CD8-positive, alpha-beta T cell (primary cell): ENCODE measurements at regions of chr9 and their contacts with region 1.

Region 1: GRCh38 chr9:109119439-109120203 is at the start of gene TMEM245:
- DNase-seq: peak; percentile 87 to 99 (median 94)
- ATAC-seq: peak; percentile 93
- H3K4me3 ChIP-seq: peak within 1 kb of the TSS; percentile 70 to 88
- H3K4me3 Mint-ChIP-seq: peak within 1 kb of the TSS; percentile 93
- H3K27ac ChIP-seq: peak within 1 kb of the TSS; percentile 68 to 85
- H3K27ac Mint-ChIP-seq: peak within 1 kb of the TSS; percentile 89
- H3K4me1 ChIP-seq: peaks cover 42% of the 10 kb centered on the region
- H3K4me1 Mint-ChIP-seq: peaks cover 39% of the 10 kb centered on the region
- H3K27me3 ChIP-seq: no peaks in the 10 kb centered on the region
- H3K27me3 Mint-ChIP-seq: no peaks in the 10 kb centered on the region
- CTCF ChIP-seq: no peak
- total RNA-seq, gene TMEM245: 22.8 to 24.7 TPM

Region 2: GRCh38 chr9:107282753-107283625 is 1836.6 kb before region 1 on chr9 and contains the start of gene RAD23B:
- CTCF ChIA-PET with region 1: no interaction called
- POLR2A ChIA-PET with region 1: no interaction called
- intact Hi-C with region 1: loop called in 1 of 2 experiments (anchors 2 kb)
- DNase-seq: peak; percentile 96 to 99 (median 98)
- ATAC-seq: peak; percentile 87
- H3K4me3 ChIP-seq: peak within 1 kb of the TSS; percentile 69 to 90
- H3K4me3 Mint-ChIP-seq: peak within 1 kb of the TSS; percentile 96
- H3K27ac ChIP-seq: peak within 1 kb of the TSS; percentile 81 to 87
- H3K27ac Mint-ChIP-seq: peak within 1 kb of the TSS; percentile 94
- H3K4me1 ChIP-seq: peaks cover 37% of the 10 kb centered on the region
- H3K4me1 Mint-ChIP-seq: peaks cover 42% of the 10 kb centered on the region
- H3K27me3 ChIP-seq: peaks cover 0 to under 1% of the 10 kb centered on the region in 2 experiments
- H3K27me3 Mint-ChIP-seq: no peaks in the 10 kb centered on the region
- CTCF ChIP-seq: no peak
- total RNA-seq, gene RAD23B: 82.9 to 91.0 TPM

Region 3: DNA sequence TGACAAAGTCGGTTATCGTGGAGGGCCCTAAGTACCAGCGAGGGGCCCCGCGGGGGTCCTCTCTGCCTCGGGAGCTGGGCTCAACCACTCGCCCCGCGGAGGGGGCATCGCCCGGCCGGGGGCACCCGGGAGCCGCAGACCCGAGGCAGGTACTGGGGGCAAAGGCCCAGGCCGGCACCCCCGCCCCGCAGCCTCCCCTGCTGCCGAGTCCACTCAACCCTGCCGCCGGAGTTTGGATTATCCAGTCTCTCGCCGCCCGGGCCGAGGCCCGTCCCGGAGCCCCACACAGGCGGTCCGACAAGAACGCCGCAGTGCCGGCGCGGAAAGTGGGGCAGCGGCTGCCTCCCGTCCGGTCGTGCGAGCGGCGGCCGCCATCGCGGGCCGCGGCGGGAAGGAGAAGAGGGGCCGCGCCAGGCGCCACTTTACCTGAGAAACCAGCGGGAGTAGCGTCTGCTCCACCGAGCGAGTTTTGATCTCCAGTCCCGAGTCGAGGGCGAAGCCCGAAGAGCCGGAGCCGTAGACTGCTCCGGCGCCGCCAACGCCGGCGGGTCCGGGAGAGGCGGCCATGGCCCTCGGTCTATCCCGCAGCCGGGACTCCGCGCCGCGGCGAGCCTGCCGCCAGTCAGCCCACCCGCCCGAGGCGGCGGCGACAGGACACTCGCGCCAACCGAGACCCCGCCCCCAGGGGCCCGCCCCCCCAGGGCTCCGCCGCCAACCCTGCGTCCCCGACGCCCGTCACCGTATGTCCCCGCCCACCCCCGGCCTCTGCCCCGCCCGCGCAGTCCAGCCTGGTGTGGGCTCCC is 106.5 kb before region 1 on chr9 and contains the start of gene CTNNAL1:
- CTCF ChIA-PET with region 1: no interaction called
- POLR2A ChIA-PET with region 1: interaction called, 3 read pairs
- intact Hi-C with region 1: loop called (anchors 1 kb)
- DNase-seq: peak; percentile 74 to 92 (median 87)
- ATAC-seq: peak; percentile 91
- H3K4me3 ChIP-seq: peak within 1 kb of the TSS; percentile 45 to 56
- H3K4me3 Mint-ChIP-seq: peak within 1 kb of the TSS; percentile 95
- H3K27ac ChIP-seq: peak within 1 kb of the TSS; percentile 47 to 68
- H3K27ac Mint-ChIP-seq: peak within 1 kb of the TSS; percentile 91
- H3K4me1 ChIP-seq: peaks cover 7% of the 10 kb centered on the region
- H3K4me1 Mint-ChIP-seq: peaks cover 26% of the 10 kb centered on the region
- H3K27me3 ChIP-seq: no peaks in the 10 kb centered on the region
- H3K27me3 Mint-ChIP-seq: peaks cover 10% of the 10 kb centered on the region
- CTCF ChIP-seq: no peak
- total RNA-seq, gene CTNNAL1: 4.5 to 4.8 TPM

Region 4: DNA sequence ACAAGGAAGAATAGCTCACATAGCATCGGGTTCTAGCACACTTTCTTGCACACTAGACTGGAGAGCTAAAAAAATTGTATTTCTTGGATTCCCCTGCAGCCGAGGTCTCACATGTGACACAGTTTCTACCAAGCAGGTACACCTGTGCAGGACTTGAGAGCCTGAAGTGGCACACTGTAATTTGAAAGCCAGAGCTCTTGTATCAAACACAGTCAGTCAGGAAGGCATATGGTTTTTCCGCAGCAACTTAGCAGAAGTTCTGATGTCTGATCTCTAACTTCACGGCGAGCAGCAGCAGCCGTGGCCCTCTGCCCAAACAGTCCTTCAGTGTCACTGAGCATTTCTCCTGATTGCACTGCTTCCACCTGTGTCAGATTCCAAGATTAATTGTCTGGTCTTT is 25.4 kb before region 1 on chr9:
- CTCF ChIA-PET with region 1: no interaction called
- POLR2A ChIA-PET with region 1: interaction called, 13 read pairs
- intact Hi-C with region 1: no loop called
- DNase-seq: no peak
- ATAC-seq: no peak
- H3K4me3 ChIP-seq: no peak overlapping the region
- H3K4me3 Mint-ChIP-seq: peak overlapping the region; percentile 32
- H3K27ac ChIP-seq: no peak overlapping the region
- H3K27ac Mint-ChIP-seq: peak overlapping the region; percentile 79
- H3K4me1 ChIP-seq: peaks cover 44% of the 10 kb centered on the region
- H3K4me1 Mint-ChIP-seq: peaks cover 66% of the 10 kb centered on the region
- H3K27me3 ChIP-seq: no peaks in the 10 kb centered on the region
- H3K27me3 Mint-ChIP-seq: no peaks in the 10 kb centered on the region
- CTCF ChIP-seq: no peak

Region 5: DNA sequence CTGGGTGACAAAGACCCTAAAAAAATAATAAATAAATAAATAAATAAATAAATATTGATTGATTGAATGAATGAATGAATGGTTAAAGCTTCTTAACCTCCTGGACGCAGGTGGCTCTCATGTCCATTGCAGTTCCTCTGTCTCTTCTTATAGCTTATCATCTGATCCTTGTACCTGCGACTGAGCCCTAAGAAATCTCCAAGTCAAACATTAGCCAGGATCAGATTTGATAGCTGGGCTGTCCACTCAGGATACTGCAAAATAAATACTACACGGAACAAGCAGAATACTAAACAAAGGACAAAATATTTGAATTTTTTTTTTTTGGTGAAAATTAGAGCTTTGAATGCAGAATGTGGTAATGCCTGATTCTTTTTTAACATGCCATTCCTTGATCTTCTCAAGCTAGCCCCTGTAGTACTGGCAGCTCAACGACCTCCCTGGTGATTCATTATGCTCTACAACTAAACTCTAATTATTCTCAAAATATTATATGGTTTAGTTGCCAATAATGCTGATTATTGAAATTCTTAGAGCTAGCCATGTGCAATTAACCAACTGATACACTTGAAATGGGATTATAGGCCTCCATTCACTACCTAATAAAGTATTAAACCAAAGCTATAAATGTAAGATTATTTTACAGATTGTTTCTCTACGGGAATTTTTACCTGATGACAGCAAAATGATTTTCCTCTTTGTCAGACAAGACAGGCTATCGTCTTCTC is 10.0 kb after region 1 on chr9:
- CTCF ChIA-PET with region 1: interaction called, 3 read pairs
- POLR2A ChIA-PET with region 1: interaction called, 10 read pairs
- intact Hi-C with region 1: no loop called
- DNase-seq: no peak
- ATAC-seq: no peak
- H3K4me3 ChIP-seq: no peak overlapping the region
- H3K4me3 Mint-ChIP-seq: no peak overlapping the region
- H3K27ac ChIP-seq: no peak overlapping the region
- H3K27ac Mint-ChIP-seq: no peak overlapping the region
- H3K4me1 ChIP-seq: no peaks in the 10 kb centered on the region
- H3K4me1 Mint-ChIP-seq: peaks cover 5% of the 10 kb centered on the region
- H3K27me3 ChIP-seq: no peaks in the 10 kb centered on the region
- H3K27me3 Mint-ChIP-seq: no peaks in the 10 kb centered on the region
- CTCF ChIP-seq: no peak